Mammary epithelial cell (primary cell): ENCODE measurements at regions of chr5 and their contacts with region 1.

Region 1: DNA sequence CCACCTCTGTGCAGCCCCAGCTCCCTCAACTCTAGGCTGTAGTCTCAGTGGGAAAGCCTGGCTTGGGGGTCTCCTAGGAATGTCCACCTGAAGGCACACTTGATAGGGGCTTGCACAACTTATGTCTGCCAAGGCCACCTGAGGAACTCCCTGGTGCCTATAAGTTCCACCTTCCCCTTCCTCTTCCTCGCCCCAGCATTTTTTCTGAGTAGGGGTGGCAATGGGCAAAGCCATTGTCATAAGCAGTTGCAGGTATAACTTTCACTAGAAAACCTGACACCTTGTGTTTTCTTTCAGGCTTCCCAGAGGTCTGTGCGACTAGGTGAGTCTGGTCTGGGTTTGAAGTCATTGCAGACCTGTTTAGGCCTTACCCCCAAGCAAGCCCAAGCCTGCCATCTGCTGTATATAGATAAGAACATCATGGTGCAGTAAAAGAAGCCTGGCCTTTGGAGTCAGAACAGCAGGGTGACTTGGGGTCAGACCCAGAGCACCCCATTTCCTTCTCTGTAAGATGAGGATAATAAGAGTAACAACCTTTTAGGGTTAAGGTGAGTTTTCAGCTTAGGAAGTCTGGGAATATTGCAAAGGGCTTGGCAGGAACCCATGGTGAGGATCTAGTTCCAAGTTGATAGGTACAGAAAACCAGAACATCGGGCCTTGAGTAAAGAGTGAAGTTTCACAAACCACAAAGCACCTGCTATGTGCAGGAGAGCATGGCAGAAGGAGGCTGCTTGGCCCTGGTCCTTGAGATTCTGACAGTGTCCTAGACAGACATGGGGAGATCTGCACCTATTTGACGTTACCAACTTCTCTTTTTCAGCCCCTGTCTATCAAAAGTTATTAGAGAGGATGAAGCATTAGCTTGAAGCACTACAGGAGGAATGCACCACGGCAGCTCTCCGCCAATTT is 33.8 kb downstream of the TGFBI start:
- DNase-seq: peak; percentile 53
- H3K4me3 ChIP-seq: no peak overlapping the region
- H3K27ac ChIP-seq: no peak overlapping the region
- H3K4me1 ChIP-seq: peaks cover 15% of the 10 kb centered on the region
- H3K27me3 ChIP-seq: no peaks in the 10 kb centered on the region
- CTCF ChIP-seq: peak; percentile 55 to 70

Region 2: GRCh38 chr5:135887351-135887864 is 175.2 kb before region 1 on chr5:
- CTCF ChIA-PET with region 1: no interaction called
- dilution Hi-C with region 1: no loop called
- in situ Hi-C with region 1: no loop called
- intact Hi-C with region 1: loop called (anchors 1 kb)
- DNase-seq: peak; percentile 64
- H3K4me3 ChIP-seq: no peak overlapping the region
- H3K27ac ChIP-seq: no peak overlapping the region
- H3K4me1 ChIP-seq: peaks cover 3% of the 10 kb centered on the region
- H3K27me3 ChIP-seq: no peaks in the 10 kb centered on the region
- CTCF ChIP-seq: peak; percentile 81 to 83

Region 3: GRCh38 chr5:135977375-135977928 is 85.2 kb before region 1 on chr5:
- CTCF ChIA-PET with region 1: no interaction called
- dilution Hi-C with region 1: loop called (anchors 5 kb)
- in situ Hi-C with region 1: no loop called
- intact Hi-C with region 1: no loop called
- DNase-seq: peak; percentile 16
- H3K4me3 ChIP-seq: no peak overlapping the region
- H3K27ac ChIP-seq: no peak overlapping the region
- H3K4me1 ChIP-seq: peaks cover 8% of the 10 kb centered on the region
- H3K27me3 ChIP-seq: no peaks in the 10 kb centered on the region
- CTCF ChIP-seq: peak; percentile 85 to 86

Region 4: DNA sequence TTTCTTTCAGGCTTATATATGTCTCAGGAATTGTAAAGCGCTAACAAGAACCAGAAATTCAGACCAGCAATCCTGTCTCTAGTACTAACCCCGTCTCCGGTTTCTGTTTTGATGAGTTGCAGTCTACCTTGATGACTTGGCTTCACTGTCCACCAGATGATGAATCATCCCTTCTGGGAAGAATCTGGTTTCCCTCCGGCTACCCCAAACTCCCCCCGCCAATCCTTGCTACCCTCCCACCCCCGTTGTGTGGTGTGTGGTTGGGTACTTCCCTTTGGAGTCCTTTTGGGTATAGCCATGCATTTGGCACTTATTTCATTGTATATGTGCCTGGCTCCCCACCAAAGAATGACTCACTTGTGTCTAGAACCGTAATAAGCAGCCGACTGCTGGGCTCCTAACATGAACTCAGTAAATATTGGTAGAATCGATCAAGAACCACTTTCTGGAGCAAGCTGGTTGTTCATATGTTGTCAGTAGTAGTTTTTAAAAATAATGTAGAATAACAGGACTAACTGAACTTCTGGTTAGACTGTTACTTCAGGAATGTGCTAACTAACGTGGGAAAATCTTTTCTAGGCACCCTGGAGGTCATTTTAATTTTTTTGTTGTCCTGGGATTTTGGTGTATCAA is 42.1 kb before region 1 on chr5:
- CTCF ChIA-PET with region 1: no interaction called
- dilution Hi-C with region 1: loop called (anchors 5 kb)
- in situ Hi-C with region 1: no loop called
- intact Hi-C with region 1: no loop called
- DNase-seq: peak; percentile 100
- H3K4me3 ChIP-seq: no peak overlapping the region
- H3K27ac ChIP-seq: peak overlapping the region; percentile 91
- H3K4me1 ChIP-seq: peaks cover 63% of the 10 kb centered on the region
- H3K27me3 ChIP-seq: no peaks in the 10 kb centered on the region
- CTCF ChIP-seq: no peak

Region 5: GRCh38 chr5:136192526-136193321 is 130.1 kb after region 1 on chr5 and contains the start of gene SMIM32:
- CTCF ChIA-PET with region 1: no interaction called
- dilution Hi-C with region 1: no loop called
- in situ Hi-C with region 1: no loop called
- intact Hi-C with region 1: no loop called
- DNase-seq: no peak
- H3K4me3 ChIP-seq: peak within 1 kb of the TSS in 2 of 3 experiments; percentile 29 to 33
- H3K27ac ChIP-seq: no peak within 1 kb of the TSS
- H3K4me1 ChIP-seq: peaks cover 21% of the 10 kb centered on the region
- H3K27me3 ChIP-seq: peaks cover 6% of the 10 kb centered on the region
- CTCF ChIP-seq: no peak
- total RNA-seq, gene SMIM32: not detected

Region 6: GRCh38 chr5:136212252-136212721 is 149.7 kb after region 1 on chr5:
- CTCF ChIA-PET with region 1: no interaction called
- dilution Hi-C with region 1: no loop called
- in situ Hi-C with region 1: no loop called
- intact Hi-C with region 1: loop called (anchors 1 kb)
- DNase-seq: no peak
- H3K4me3 ChIP-seq: no peak overlapping the region
- H3K27ac ChIP-seq: no peak overlapping the region
- H3K4me1 ChIP-seq: no peaks in the 10 kb centered on the region
- H3K27me3 ChIP-seq: no peaks in the 10 kb centered on the region
- CTCF ChIP-seq: peak; percentile 79 to 90